ENCODE measurements at regions of chr14 and their contacts with region 1.

Region 1: GRCh38 chr14:24310646-24311604 is at the start of gene LTB4R:
- DNase-seq: peak; percentile 56 to 82 (median 74)
- H3K4me3 ChIP-seq: peak within 1 kb of the TSS; percentile 58
- H3K4me3 Mint-ChIP-seq: peak within 1 kb of the TSS; percentile 79 to 89 (median 86)
- H3K27ac ChIP-seq: peak within 1 kb of the TSS; percentile 69
- H3K27ac Mint-ChIP-seq: peak within 1 kb of the TSS; percentile 89 to 99 (median 96)
- H3K4me1 ChIP-seq: peaks cover 66% of the 10 kb centered on the region
- H3K4me1 Mint-ChIP-seq: peaks cover 68 to 77% (median 71%) of the 10 kb centered on the region in 3 donors
- H3K27me3 ChIP-seq: no peaks in the 10 kb centered on the region
- H3K27me3 Mint-ChIP-seq: peaks cover 0 to 2% of the 10 kb centered on the region in 2 donors
- total RNA-seq, gene LTB4R: 9.8 to 12.3 TPM

Region 2: GRCh38 chr14:24215495-24216344 is 95.2 kb before region 1 on chr14 and contains the start of gene MDP1:
- CTCF ChIA-PET with region 1: interaction called, 13 read pairs
- POLR2A ChIA-PET with region 1: interaction called, 4 read pairs
- DNase-seq: peak; percentile 76 to 92 (median 85)
- H3K4me3 ChIP-seq: peak within 1 kb of the TSS; percentile 94
- H3K4me3 Mint-ChIP-seq: peak within 1 kb of the TSS; percentile 87 to 97 (median 95)
- H3K27ac ChIP-seq: peak within 1 kb of the TSS; percentile 97
- H3K27ac Mint-ChIP-seq: peak within 1 kb of the TSS; percentile 95 to 100 (median 98)
- H3K4me1 ChIP-seq: peaks cover 39% of the 10 kb centered on the region
- H3K4me1 Mint-ChIP-seq: peaks cover 38 to 54% (median 50%) of the 10 kb centered on the region in 3 donors
- H3K27me3 ChIP-seq: no peaks in the 10 kb centered on the region
- H3K27me3 Mint-ChIP-seq: no peaks in the 10 kb centered on the region
- total RNA-seq, gene MDP1: 15.5 to 16.2 TPM

Region 3: GRCh38 chr14:24271134-24271833 is 39.6 kb before region 1 on chr14 and contains the start of gene RABGGTA:
- CTCF ChIA-PET with region 1: interaction called, 20 read pairs
- POLR2A ChIA-PET with region 1: interaction called, 7 read pairs
- DNase-seq: peak; percentile 87 to 98 (median 96)
- H3K4me3 ChIP-seq: peak within 1 kb of the TSS; percentile 63
- H3K4me3 Mint-ChIP-seq: peak within 1 kb of the TSS; percentile 88 to 93 (median 92)
- H3K27ac ChIP-seq: peak within 1 kb of the TSS; percentile 86
- H3K27ac Mint-ChIP-seq: peak within 1 kb of the TSS; percentile 96 to 99 (median 98)
- H3K4me1 ChIP-seq: peaks cover 30% of the 10 kb centered on the region
- H3K4me1 Mint-ChIP-seq: peaks cover 37 to 44% (median 41%) of the 10 kb centered on the region in 3 donors
- H3K27me3 ChIP-seq: no peaks in the 10 kb centered on the region
- H3K27me3 Mint-ChIP-seq: peaks cover 0 to 5% of the 10 kb centered on the region in 2 donors
- total RNA-seq, gene RABGGTA: 41.0 to 41.8 TPM

Region 4: GRCh38 chr14:24289649-24290249 is 21.2 kb before region 1 on chr14:
- CTCF ChIA-PET with region 1: interaction called, 10 read pairs
- POLR2A ChIA-PET with region 1: no interaction called
- DNase-seq: no peak
- H3K4me3 ChIP-seq: no peak overlapping the region
- H3K4me3 Mint-ChIP-seq: no peak overlapping the region
- H3K27ac ChIP-seq: no peak overlapping the region
- H3K27ac Mint-ChIP-seq: peak overlapping the region in 3 of 8 donors; percentile 15 to 73 (median 50)
- H3K4me1 ChIP-seq: no peaks in the 10 kb centered on the region
- H3K4me1 Mint-ChIP-seq: peaks cover 0 to 15% (median 1%) of the 10 kb centered on the region in 3 donors
- H3K27me3 ChIP-seq: no peaks in the 10 kb centered on the region
- H3K27me3 Mint-ChIP-seq: peaks cover 0 to 2% of the 10 kb centered on the region in 2 donors

Region 5: GRCh38 chr14:24299255-24300195 is 11.4 kb before region 1 on chr14 and contains the starts of genes DHRS1 and NOP9:
- CTCF ChIA-PET with region 1: interaction called, 92 read pairs
- POLR2A ChIA-PET with region 1: interaction called, 14 read pairs
- DNase-seq: peak; percentile 87 to 93 (median 89)
- H3K4me3 ChIP-seq: peak within 1 kb of the TSS; percentile 83
- H3K4me3 Mint-ChIP-seq: peak within 1 kb of the TSS; percentile 89 to 97 (median 92)
- H3K27ac ChIP-seq: peak within 1 kb of the TSS; percentile 79
- H3K27ac Mint-ChIP-seq: peak within 1 kb of the TSS; percentile 94 to 99 (median 96)
- H3K4me1 ChIP-seq: peaks cover 47% of the 10 kb centered on the region
- H3K4me1 Mint-ChIP-seq: peaks cover 41 to 59% (median 54%) of the 10 kb centered on the region in 3 donors
- H3K27me3 ChIP-seq: no peaks in the 10 kb centered on the region
- H3K27me3 Mint-ChIP-seq: no peaks in the 10 kb centered on the region
- total RNA-seq, gene DHRS1: 9.3 to 9.8 TPM
- total RNA-seq, gene NOP9: 44.1 to 47.1 TPM

Region 6: GRCh38 chr14:24339284-24340151 is 28.6 kb after region 1 on chr14 and contains the start of gene RIPK3:
- CTCF ChIA-PET with region 1: interaction called, 265 read pairs
- POLR2A ChIA-PET with region 1: no interaction called
- DNase-seq: peak; percentile 50 to 75 (median 57)
- H3K4me3 ChIP-seq: peak within 1 kb of the TSS; percentile 92
- H3K4me3 Mint-ChIP-seq: peak within 1 kb of the TSS; percentile 95 to 97 (median 97)
- H3K27ac ChIP-seq: peak within 1 kb of the TSS; percentile 60
- H3K27ac Mint-ChIP-seq: peak within 1 kb of the TSS; percentile 55 to 96 (median 93)
- H3K4me1 ChIP-seq: peaks cover 31% of the 10 kb centered on the region
- H3K4me1 Mint-ChIP-seq: peaks cover 29 to 50% (median 43%) of the 10 kb centered on the region in 3 donors
- H3K27me3 ChIP-seq: peaks cover 10% of the 10 kb centered on the region
- H3K27me3 Mint-ChIP-seq: peaks cover 15 to 19% of the 10 kb centered on the region in 2 donors
- total RNA-seq, gene RIPK3: 11.6 to 12.5 TPM

Region 7: GRCh38 chr14:24377657-24378056 is 66.7 kb after region 1 on chr14:
- CTCF ChIA-PET with region 1: no interaction called
- POLR2A ChIA-PET with region 1: no interaction called
- DNase-seq: no peak
- H3K4me3 ChIP-seq: no peak overlapping the region
- H3K4me3 Mint-ChIP-seq: no peak overlapping the region
- H3K27ac ChIP-seq: no peak overlapping the region
- H3K27ac Mint-ChIP-seq: no peak overlapping the region
- H3K4me1 ChIP-seq: no peaks in the 10 kb centered on the region
- H3K4me1 Mint-ChIP-seq: no peaks in the 10 kb centered on the region
- H3K27me3 ChIP-seq: no peaks in the 10 kb centered on the region
- H3K27me3 Mint-ChIP-seq: peaks cover 5 to 20% of the 10 kb centered on the region in 2 donors

Region 8: GRCh38 chr14:24442273-24443052 is 131.5 kb after region 1 on chr14 and contains the start of gene SDR39U1:
- CTCF ChIA-PET with region 1: interaction called, 12 read pairs
- POLR2A ChIA-PET with region 1: interaction called, 3 read pairs
- DNase-seq: peak; percentile 93 to 99 (median 96)
- H3K4me3 ChIP-seq: peak within 1 kb of the TSS; percentile 96
- H3K4me3 Mint-ChIP-seq: peak within 1 kb of the TSS; percentile 88 to 99 (median 96)
- H3K27ac ChIP-seq: peak within 1 kb of the TSS; percentile 97
- H3K27ac Mint-ChIP-seq: peak within 1 kb of the TSS; percentile 93 to 99 (median 98)
- H3K4me1 ChIP-seq: peaks cover 25% of the 10 kb centered on the region
- H3K4me1 Mint-ChIP-seq: peaks cover 34 to 54% (median 48%) of the 10 kb centered on the region in 3 donors
- H3K27me3 ChIP-seq: no peaks in the 10 kb centered on the region
- H3K27me3 Mint-ChIP-seq: peaks cover 0 to 4% of the 10 kb centered on the region in 2 donors
- total RNA-seq, gene SDR39U1: 58.1 to 59.6 TPM